Activated CD4-positive, alpha-beta memory T cell treated with anti-CD3 and anti-CD28 coated beads for 36 hours (primary cell): ENCODE measurements at regions of chr17 and their contacts with region 1.

Region 1: GRCh38 chr17:75046582-75047289 is at the starts of genes ATP5PD and KCTD2:
- DNase-seq: peak; percentile 98
- H3K4me3 Mint-ChIP-seq: peak within 1 kb of the TSS; percentile 97
- H3K27ac Mint-ChIP-seq: peak within 1 kb of the TSS; percentile 91
- H3K4me1 Mint-ChIP-seq: peaks cover 42% of the 10 kb centered on the region
- H3K27me3 Mint-ChIP-seq: no peaks in the 10 kb centered on the region
- total RNA-seq, gene ATP5PD: 249 to 261 TPM
- total RNA-seq, gene KCTD2: 20.6 to 23.3 TPM

Region 2: GRCh38 chr17:74769856-74770497 is 276.8 kb before region 1 on chr17:
- CTCF ChIA-PET with region 1: no interaction called
- POLR2A ChIA-PET with region 1: no interaction called
- intact Hi-C with region 1: no loop called
- DNase-seq: no peak
- H3K4me3 Mint-ChIP-seq: no peak overlapping the region
- H3K27ac Mint-ChIP-seq: peak overlapping the region; percentile 71
- H3K4me1 Mint-ChIP-seq: peaks cover 36% of the 10 kb centered on the region
- H3K27me3 Mint-ChIP-seq: no peaks in the 10 kb centered on the region

Region 3: DNA sequence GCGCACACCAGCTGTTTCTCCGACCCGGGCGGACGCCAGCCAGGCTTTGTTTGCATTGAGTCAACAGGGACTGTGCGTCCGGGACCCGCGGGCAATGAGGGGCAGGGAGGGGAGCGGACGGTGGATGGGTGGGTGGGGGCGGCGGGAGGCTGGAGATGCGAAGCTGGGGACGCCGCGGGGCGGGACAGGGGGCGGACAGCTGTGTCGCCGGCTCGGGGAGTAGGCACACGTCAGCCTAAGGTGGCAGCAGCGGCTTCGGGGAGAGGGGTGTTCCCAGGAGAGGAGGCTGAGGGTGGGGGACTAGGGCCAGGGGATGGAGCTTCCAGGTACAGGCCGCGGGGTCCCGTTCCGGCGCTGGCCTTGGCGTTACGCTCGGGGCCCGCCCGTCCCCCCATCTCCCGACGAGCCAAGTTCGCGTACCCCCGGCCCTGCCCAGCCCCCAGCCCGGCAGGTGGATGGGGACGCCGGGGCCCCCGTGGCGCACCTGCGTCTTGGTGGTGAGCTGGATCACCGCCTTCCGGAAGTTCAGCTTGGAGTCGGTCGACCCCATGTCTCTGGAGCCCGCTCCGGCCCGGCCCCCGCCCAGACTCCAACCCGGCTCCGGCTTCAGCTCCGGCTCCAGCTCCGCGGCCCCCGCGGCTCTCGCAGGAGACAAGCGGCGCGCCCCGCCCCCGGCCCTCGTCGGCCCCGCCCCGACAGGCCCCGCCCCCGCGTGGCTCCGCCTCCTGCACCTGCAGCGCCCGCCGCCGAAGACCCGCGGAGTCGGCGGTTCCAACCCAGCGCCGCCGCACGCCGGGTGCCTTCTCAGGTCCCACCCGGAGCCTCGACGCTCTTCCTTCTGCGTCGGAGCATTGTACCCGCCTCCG is 74.4 kb before region 1 on chr17 and contains the start of gene HID1:
- CTCF ChIA-PET with region 1: no interaction called
- POLR2A ChIA-PET with region 1: no interaction called
- intact Hi-C with region 1: no loop called
- DNase-seq: peak; percentile 82
- H3K4me3 Mint-ChIP-seq: peak within 1 kb of the TSS; percentile 73
- H3K27ac Mint-ChIP-seq: no peak within 1 kb of the TSS
- H3K4me1 Mint-ChIP-seq: peaks cover 5% of the 10 kb centered on the region
- H3K27me3 Mint-ChIP-seq: peaks cover 10% of the 10 kb centered on the region
- total RNA-seq, gene HID1: 2.3 to 2.6 TPM

Region 4: DNA sequence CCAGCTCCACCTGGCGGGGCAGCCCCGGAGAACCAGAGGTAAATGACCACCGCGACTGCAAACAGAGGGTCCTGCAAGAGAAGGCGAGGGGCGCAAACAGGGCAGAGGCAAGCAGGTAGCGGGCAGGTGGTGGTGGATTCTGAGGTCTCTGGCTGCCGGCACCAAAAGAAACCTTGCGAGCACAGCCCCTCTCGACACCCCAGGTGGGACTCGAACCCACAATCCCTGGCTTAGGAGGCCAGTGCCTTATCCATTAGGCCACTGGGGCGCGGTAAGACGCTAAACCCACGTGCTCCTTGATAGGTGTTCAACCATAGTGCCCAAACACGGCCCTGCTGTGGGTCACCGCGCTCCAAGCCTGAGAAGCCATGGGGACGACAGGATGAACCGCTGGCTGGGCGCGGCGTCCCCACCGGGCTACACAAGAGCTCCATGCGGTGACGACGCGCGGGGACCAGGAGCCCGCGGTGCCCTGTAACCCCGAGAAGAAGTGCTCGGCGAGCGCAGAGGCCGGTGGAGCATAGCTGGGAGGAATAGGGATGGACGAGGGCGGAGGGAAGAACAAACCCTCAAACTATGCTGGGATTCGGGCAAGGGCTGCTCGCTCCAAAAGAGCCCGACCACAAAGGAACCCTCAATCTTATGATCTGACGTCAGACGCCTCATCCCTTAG is 12.4 kb before region 1 on chr17:
- CTCF ChIA-PET with region 1: interaction called, 7 read pairs
- POLR2A ChIA-PET with region 1: interaction called, 26 read pairs
- intact Hi-C with region 1: loop called (anchors 1 kb)
- DNase-seq: peak; percentile 95
- H3K4me3 Mint-ChIP-seq: peak overlapping the region; percentile 97
- H3K27ac Mint-ChIP-seq: peak overlapping the region; percentile 96
- H3K4me1 Mint-ChIP-seq: peaks cover 49% of the 10 kb centered on the region
- H3K27me3 Mint-ChIP-seq: peaks cover 4% of the 10 kb centered on the region

Region 5: DNA sequence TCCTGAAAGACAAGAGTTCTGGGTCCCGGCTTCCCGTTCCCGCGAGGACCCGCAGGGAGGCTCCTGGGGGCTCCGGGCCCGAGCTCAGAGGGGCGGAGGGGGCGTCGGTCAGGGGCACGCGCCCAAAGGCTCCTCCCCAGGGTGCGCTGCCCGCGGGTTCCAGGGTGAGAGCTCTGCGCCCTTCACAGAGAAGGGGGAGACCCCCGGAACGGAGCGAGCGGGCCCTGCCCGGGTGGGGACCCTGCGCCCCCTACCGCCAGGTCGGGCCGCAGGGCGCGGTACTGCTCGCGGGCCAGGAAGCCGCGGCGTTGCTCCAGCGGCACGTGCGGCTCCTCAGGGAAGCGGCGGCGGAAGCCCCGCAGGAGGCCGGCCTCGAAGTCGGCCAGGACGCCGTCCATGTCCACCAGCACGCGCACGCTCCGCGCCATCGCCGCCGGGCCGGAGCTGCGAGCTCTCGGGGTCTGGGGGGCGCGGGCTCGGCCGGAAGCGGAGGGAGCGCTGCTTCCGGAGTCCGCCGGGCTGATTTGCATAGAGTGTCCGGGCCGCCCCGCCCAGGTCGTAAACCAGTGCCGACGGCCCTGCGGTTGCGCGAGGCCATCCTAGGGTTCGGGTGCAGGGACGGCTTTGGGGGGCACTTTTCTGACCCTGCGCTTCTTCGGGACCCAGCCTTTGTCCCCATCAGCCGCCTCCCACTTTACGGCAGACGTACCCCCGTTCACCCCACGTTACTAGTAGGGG is 84.7 kb after region 1 on chr17 and contains the start of gene NT5C:
- CTCF ChIA-PET with region 1: interaction called, 3 read pairs
- POLR2A ChIA-PET with region 1: no interaction called
- intact Hi-C with region 1: loop called (anchors 5 kb)
- DNase-seq: peak; percentile 83
- H3K4me3 Mint-ChIP-seq: peak within 1 kb of the TSS; percentile 84
- H3K27ac Mint-ChIP-seq: peak within 1 kb of the TSS; percentile 86
- H3K4me1 Mint-ChIP-seq: peaks cover 18% of the 10 kb centered on the region
- H3K27me3 Mint-ChIP-seq: no peaks in the 10 kb centered on the region
- total RNA-seq, gene NT5C: 65.2 to 70.8 TPM

Region 6: DNA sequence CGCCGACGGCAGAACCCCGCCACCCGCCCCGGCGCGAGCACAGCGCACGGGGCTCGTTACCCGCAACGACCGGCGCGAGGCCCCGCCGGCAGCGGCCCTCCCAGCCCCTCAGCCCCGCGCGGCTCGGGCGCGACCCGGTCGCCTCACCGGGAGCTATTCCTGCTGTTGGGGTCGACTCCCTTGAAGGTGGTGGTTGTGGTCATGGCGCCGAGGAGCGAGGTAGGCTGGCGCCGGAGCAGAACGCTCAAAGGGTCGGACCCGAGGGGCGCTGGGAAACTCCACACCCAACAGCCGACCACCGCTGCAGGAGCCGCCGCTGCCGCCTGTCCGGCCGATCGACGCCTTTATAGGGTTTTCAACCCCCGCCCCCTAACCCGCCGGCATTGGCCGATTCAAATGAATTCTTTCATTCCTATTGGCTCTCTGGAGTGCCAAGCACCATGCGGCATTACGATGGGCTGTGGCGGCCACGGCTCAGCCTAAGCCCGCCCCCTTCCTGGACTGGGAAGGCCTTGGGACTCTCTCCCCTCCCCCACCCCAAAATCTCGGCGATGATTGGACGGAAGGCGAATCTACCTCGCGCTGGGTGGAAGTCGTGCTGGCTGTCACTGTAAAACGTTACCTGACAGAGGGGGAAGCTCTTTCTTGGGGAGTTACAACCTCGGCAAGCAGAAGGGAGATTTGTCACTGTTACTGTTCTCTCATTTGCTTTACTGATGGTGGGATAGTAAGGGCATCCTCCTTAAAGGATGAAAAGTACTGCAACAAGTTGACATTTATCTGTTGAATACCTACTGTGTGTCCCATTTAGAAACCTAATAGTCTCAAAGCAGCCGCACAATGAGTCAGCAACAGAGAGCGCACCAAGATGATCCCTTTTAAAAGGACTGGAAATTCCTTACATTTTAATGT is 107.7 kb after region 1 on chr17 and contains the start of gene JPT1:
- CTCF ChIA-PET with region 1: no interaction called
- POLR2A ChIA-PET with region 1: no interaction called
- intact Hi-C with region 1: loop called (anchors 5 kb)
- DNase-seq: peak; percentile 99
- H3K4me3 Mint-ChIP-seq: peak within 1 kb of the TSS; percentile 95
- H3K27ac Mint-ChIP-seq: peak within 1 kb of the TSS; percentile 86
- H3K4me1 Mint-ChIP-seq: peaks cover 34% of the 10 kb centered on the region
- H3K27me3 Mint-ChIP-seq: no peaks in the 10 kb centered on the region
- total RNA-seq, gene JPT1: 263 to 267 TPM